ENCODE measurements at regions of chr5 and their contacts with region 1.

Region 1: GRCh38 chr5:90534922-90535321 is 5.5 kb upstream of the LYSMD3 start:
- DNase-seq: peak; percentile 83
- ATAC-seq: peak; percentile 54
- H3K4me3 ChIP-seq: no peak overlapping the region
- H3K27ac ChIP-seq: peak overlapping the region; percentile 61
- H3K4me1 ChIP-seq: peaks cover 26% of the 10 kb centered on the region
- H3K27me3 ChIP-seq: no peaks in the 10 kb centered on the region
- CTCF ChIP-seq: no peak

Region 2: GRCh38 chr5:90548069-90548593 is 13.2 kb after region 1 on chr5:
- CTCF ChIA-PET with region 1: no interaction called
- POLR2A ChIA-PET with region 1: no interaction called
- intact Hi-C with region 1: loop called (anchors 1 kb)
- DNase-seq: peak; percentile 98
- ATAC-seq: peak; percentile 92
- H3K4me3 ChIP-seq: peak overlapping the region; percentile 49
- H3K27ac ChIP-seq: peak overlapping the region; percentile 70
- H3K4me1 ChIP-seq: peaks cover 37% of the 10 kb centered on the region
- H3K27me3 ChIP-seq: no peaks in the 10 kb centered on the region
- CTCF ChIP-seq: no peak